IMR-90 (cell line): ENCODE measurements at regions of chrX and their contacts with region 1.

Region 1: GRCh38 chrX:123833387-123833786 is 26.5 kb upstream of the XIAP start:
- DNase-seq: peak; percentile 39
- ATAC-seq: peak; percentile 89
- H3K4me3 ChIP-seq: no peak overlapping the region
- H3K27ac ChIP-seq: no peak overlapping the region
- H3K4me1 ChIP-seq: no peaks in the 10 kb centered on the region
- H3K27me3 ChIP-seq: no peaks in the 10 kb centered on the region
- CTCF ChIP-seq: peak; percentile 68
- POLR2A ChIP-seq: no peak
- RAD21 ChIP-seq: peak; percentile 85

Region 2: DNA sequence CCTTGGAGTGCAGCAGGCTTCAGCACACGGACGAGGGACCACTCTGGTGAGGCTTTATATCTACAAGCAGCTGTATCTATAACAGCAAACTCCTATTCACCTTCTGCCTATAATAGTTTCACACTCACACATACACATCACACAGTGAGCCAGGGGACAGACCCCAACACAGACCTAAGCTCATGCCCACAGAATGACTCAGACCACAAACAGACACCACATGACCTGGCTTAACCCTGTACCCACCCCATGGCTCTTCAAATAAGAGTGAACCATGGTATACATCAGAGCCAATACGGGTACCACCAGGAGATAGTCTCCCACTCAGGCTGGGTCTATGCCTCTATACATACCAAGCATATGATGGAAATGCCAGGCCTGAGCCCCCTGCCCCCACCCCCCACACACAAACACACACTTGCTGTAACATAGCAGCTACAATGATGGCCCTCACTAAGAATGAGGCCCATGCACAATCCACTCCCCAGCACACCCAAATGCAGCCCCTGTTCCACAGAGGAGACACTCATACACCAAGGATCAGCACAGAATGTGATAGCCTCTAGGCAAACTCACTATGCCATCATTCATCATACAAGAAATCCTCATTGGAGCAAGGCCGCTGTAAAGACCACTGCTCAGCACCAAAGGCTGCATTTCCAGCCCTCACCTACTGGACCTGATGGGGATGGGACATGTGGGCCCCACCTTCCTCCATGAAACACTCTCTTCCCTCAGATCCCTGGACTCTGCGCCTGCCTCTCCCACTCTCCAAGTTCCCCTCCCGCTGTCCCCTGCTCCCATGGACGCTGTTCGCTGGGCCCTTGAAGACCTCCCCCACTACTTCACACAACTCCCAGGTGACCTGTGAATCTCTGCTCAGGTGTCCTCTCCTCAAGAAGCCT is 35.6 kb before region 1 on chrX:
- CTCF ChIA-PET with region 1: no interaction called
- POLR2A ChIA-PET with region 1: no interaction called
- dilution Hi-C with region 1: no loop called
- in situ Hi-C with region 1: no loop called
- intact Hi-C with region 1: no loop called
- DNase-seq: no peak
- ATAC-seq: no peak
- H3K4me3 ChIP-seq: no peak overlapping the region
- H3K27ac ChIP-seq: no peak overlapping the region
- H3K4me1 ChIP-seq: no peaks in the 10 kb centered on the region
- H3K27me3 ChIP-seq: no peaks in the 10 kb centered on the region
- CTCF ChIP-seq: no peak
- POLR2A ChIP-seq: no peak
- RAD21 ChIP-seq: no peak

Region 3: DNA sequence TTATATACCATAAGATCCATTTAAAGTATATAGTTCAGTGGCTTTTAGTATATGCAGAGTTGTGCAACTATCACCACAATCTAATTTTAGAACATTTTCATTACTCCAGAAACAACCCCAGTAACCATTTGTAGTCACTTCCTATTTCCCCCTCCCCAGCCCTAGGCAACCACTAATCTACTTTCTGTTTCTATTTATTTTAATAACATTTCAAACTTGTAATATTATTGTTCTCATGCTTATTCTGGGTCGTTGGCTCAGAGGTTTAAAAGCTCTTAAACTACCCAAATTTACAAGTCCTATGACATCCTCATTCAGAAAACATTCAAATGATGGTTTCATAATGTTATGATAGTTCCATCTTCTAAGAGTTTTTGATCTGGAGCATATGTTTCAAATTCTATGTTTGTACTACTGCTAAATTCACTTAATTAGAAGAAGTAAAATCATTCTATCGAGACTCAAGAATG is 44.9 kb after region 1 on chrX:
- CTCF ChIA-PET with region 1: no interaction called
- POLR2A ChIA-PET with region 1: no interaction called
- dilution Hi-C with region 1: no loop called
- in situ Hi-C with region 1: no loop called
- intact Hi-C with region 1: loop called (anchors 2 kb)
- DNase-seq: peak; percentile 42
- ATAC-seq: peak; percentile 49
- H3K4me3 ChIP-seq: no peak overlapping the region
- H3K27ac ChIP-seq: no peak overlapping the region
- H3K4me1 ChIP-seq: no peaks in the 10 kb centered on the region
- H3K27me3 ChIP-seq: no peaks in the 10 kb centered on the region
- CTCF ChIP-seq: no peak
- POLR2A ChIP-seq: no peak
- RAD21 ChIP-seq: no peak

Region 4: GRCh38 chrX:124018023-124018422 is 184.6 kb after region 1 on chrX:
- CTCF ChIA-PET with region 1: no interaction called
- POLR2A ChIA-PET with region 1: no interaction called
- dilution Hi-C with region 1: no loop called
- in situ Hi-C with region 1: no loop called
- intact Hi-C with region 1: loop called (anchors 2 kb)
- DNase-seq: peak; percentile 5
- ATAC-seq: no peak
- H3K4me3 ChIP-seq: no peak overlapping the region
- H3K27ac ChIP-seq: no peak overlapping the region
- H3K4me1 ChIP-seq: peaks cover 1% of the 10 kb centered on the region; the same call in 1 of the 2 replicates
- H3K27me3 ChIP-seq: no peaks in the 10 kb centered on the region
- CTCF ChIP-seq: peak; percentile 33
- POLR2A ChIP-seq: no peak
- RAD21 ChIP-seq: no peak; the same call in 1 of the 2 replicates

Region 5: GRCh38 chrX:124127496-124127895 is 294.1 kb after region 1 on chrX:
- CTCF ChIA-PET with region 1: no interaction called
- POLR2A ChIA-PET with region 1: no interaction called
- dilution Hi-C with region 1: no loop called
- in situ Hi-C with region 1: no loop called
- intact Hi-C with region 1: no loop called
- DNase-seq: no peak
- ATAC-seq: no peak
- H3K4me3 ChIP-seq: no peak overlapping the region
- H3K27ac ChIP-seq: no peak overlapping the region
- H3K4me1 ChIP-seq: no peaks in the 10 kb centered on the region
- H3K27me3 ChIP-seq: no peaks in the 10 kb centered on the region
- CTCF ChIP-seq: no peak
- POLR2A ChIP-seq: no peak
- RAD21 ChIP-seq: no peak